Common myeloid progenitor, CD34-positive (primary cell): ENCODE measurements at regions of chr17 and their contacts with region 1.

Region 1: DNA sequence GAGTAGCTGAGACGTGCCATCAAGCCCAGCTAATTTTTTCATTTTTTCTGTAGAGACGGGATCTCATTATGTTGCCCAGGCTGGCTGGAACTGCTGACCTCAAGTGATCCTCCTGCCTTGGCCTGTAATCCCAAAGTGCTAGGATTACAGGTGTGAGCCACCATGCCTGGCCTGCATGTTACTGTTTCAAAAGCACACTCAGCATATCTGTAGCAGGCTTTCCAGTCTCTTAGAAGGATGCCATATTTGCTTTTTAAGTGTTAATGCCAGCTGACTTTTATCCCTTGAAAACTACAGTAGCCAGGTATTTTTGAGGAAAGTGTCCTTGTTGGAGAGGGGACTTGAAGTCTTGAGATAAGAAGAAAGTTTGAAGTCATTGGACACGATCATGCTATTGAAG is 15.3 kb upstream of the SPAG9 start:
- DNase-seq: no peak
- H3K4me3 ChIP-seq: no peak overlapping the region
- H3K27ac ChIP-seq: no peak overlapping the region
- H3K4me1 ChIP-seq: peaks cover 0 to 6% (median 0%) of the 10 kb centered on the region in 4 experiments
- H3K27me3 ChIP-seq: no peaks in the 10 kb centered on the region

Region 2: GRCh38 chr17:51124640-51125503 is 11.1 kb before region 1 on chr17:
- CTCF ChIA-PET with region 1: interaction called, 11 read pairs
- POLR2A ChIA-PET with region 1: interaction called, 3 read pairs
- DNase-seq: no peak
- H3K4me3 ChIP-seq: no peak overlapping the region
- H3K27ac ChIP-seq: no peak overlapping the region
- H3K4me1 ChIP-seq: peaks cover 5 to 16% (median 13%) of the 10 kb centered on the region in 4 experiments
- H3K27me3 ChIP-seq: no peaks in the 10 kb centered on the region